CD8-positive, alpha-beta T cell (primary cell): ENCODE measurements at regions of chr1 and their contacts with region 1.

Region 1: GRCh38 chr1:23800400-23801337 is at the start of gene GALE:
- DNase-seq: peak; percentile 95 to 98 (median 97)
- ATAC-seq: peak; percentile 93
- H3K4me3 ChIP-seq: peak within 1 kb of the TSS; percentile 57 to 66
- H3K4me3 Mint-ChIP-seq: peak within 1 kb of the TSS; percentile 93
- H3K27ac ChIP-seq: peak within 1 kb of the TSS; percentile 78 to 82
- H3K27ac Mint-ChIP-seq: peak within 1 kb of the TSS; percentile 91
- H3K4me1 ChIP-seq: peaks cover 18% of the 10 kb centered on the region
- H3K4me1 Mint-ChIP-seq: peaks cover 12% of the 10 kb centered on the region
- H3K27me3 ChIP-seq: no peaks in the 10 kb centered on the region
- H3K27me3 Mint-ChIP-seq: no peaks in the 10 kb centered on the region
- CTCF ChIP-seq: no peak
- total RNA-seq, gene GALE: 4.6 to 4.7 TPM

Region 2: GRCh38 chr1:23530747-23531561 is 269.7 kb before region 1 on chr1 and contains the start of gene E2F2:
- CTCF ChIA-PET with region 1: no interaction called
- POLR2A ChIA-PET with region 1: no interaction called
- intact Hi-C with region 1: loop called in 1 of 2 experiments (anchors 2 kb)
- DNase-seq: peak; percentile 56 to 91 (median 82)
- ATAC-seq: peak; percentile 71
- H3K4me3 ChIP-seq: peak within 1 kb of the TSS; percentile 42 to 52
- H3K4me3 Mint-ChIP-seq: peak within 1 kb of the TSS; percentile 85
- H3K27ac ChIP-seq: peak within 1 kb of the TSS in 1 of 2 experiments; percentile 72
- H3K27ac Mint-ChIP-seq: peak within 1 kb of the TSS; percentile 13
- H3K4me1 ChIP-seq: peaks cover 60% of the 10 kb centered on the region
- H3K4me1 Mint-ChIP-seq: peaks cover 63% of the 10 kb centered on the region
- H3K27me3 ChIP-seq: no peaks in the 10 kb centered on the region
- H3K27me3 Mint-ChIP-seq: no peaks in the 10 kb centered on the region
- CTCF ChIP-seq: no peak
- total RNA-seq, gene E2F2: 0.19 to 0.38 TPM

Region 3: GRCh38 chr1:23777979-23778814 is 22.5 kb before region 1 on chr1 and contains the start of gene PITHD1:
- CTCF ChIA-PET with region 1: interaction called, 5 read pairs
- POLR2A ChIA-PET with region 1: interaction called, 25 read pairs
- intact Hi-C with region 1: loop called (anchors 1 kb)
- DNase-seq: peak; percentile 59 to 91 (median 78)
- ATAC-seq: peak; percentile 81
- H3K4me3 ChIP-seq: peak within 1 kb of the TSS; percentile 88 to 99
- H3K4me3 Mint-ChIP-seq: peak within 1 kb of the TSS; percentile 94
- H3K27ac ChIP-seq: peak within 1 kb of the TSS; percentile 87 to 95
- H3K27ac Mint-ChIP-seq: peak within 1 kb of the TSS; percentile 97
- H3K4me1 ChIP-seq: peaks cover 25% of the 10 kb centered on the region
- H3K4me1 Mint-ChIP-seq: peaks cover 54% of the 10 kb centered on the region
- H3K27me3 ChIP-seq: no peaks in the 10 kb centered on the region
- H3K27me3 Mint-ChIP-seq: no peaks in the 10 kb centered on the region
- CTCF ChIP-seq: no peak
- total RNA-seq, gene PITHD1: 112 to 117 TPM

Region 4: GRCh38 chr1:23838401-23838866 is 37.8 kb after region 1 on chr1:
- CTCF ChIA-PET with region 1: no interaction called
- POLR2A ChIA-PET with region 1: no interaction called
- intact Hi-C with region 1: loop called in 1 of 2 experiments (anchors 1 kb)
- DNase-seq: peak; percentile 55 to 91 (median 81)
- ATAC-seq: peak; percentile 100
- H3K4me3 ChIP-seq: peak overlapping the region; percentile 37 to 39
- H3K4me3 Mint-ChIP-seq: peak overlapping the region; percentile 79
- H3K27ac ChIP-seq: no peak overlapping the region
- H3K27ac Mint-ChIP-seq: peak overlapping the region; percentile 64
- H3K4me1 ChIP-seq: peaks cover 5% of the 10 kb centered on the region
- H3K4me1 Mint-ChIP-seq: peaks cover 11% of the 10 kb centered on the region
- H3K27me3 ChIP-seq: peaks cover 0 to 2% of the 10 kb centered on the region in 2 experiments
- H3K27me3 Mint-ChIP-seq: no peaks in the 10 kb centered on the region
- CTCF ChIP-seq: no peak

Region 5: DNA sequence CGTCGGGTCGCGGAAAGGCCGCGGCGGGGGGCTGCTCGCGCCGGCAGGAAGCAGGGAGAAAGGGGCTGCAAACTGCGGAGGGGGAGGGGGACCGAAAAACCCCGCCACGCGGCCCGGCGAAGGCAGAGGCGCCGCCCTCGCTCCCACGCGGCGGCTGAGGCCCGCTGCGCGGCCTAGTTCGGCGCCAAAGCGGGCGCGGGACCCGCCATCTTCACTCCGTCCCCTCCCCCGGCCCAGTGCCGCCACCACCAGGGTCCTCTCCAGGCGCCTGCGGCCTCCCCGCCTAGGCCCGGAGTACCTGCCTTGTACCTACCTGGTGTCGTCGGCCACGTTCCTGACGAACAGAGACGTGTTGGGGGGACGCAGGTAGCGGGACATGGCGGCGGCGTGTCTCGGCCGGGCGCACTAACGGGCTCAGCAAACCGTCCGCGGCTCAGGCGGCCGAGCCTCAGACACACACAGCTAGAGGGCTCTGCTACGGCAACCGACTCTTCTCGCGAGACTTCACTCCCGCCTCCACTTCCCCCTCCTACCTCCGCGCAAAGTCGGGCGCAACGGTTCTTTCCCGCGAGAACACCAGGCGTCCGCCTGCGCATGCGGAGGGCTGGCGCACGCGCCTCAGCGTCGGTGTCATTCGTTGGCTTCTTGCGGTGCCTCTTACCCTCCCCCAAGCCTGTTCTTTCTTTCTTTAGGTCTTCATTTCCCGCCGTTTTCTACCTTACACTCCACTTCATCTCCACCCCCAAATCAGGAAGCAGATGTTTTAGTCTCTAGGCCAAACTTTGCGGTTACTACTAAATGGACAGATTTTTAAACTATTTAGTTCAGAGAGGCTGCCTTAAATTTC is 179.4 kb after region 1 on chr1 and contains the start of gene SRSF10:
- CTCF ChIA-PET with region 1: no interaction called
- POLR2A ChIA-PET with region 1: no interaction called
- intact Hi-C with region 1: loop called in 1 of 2 experiments (anchors 10 kb)
- DNase-seq: peak; percentile 94 to 100 (median 97)
- ATAC-seq: peak; percentile 96
- H3K4me3 ChIP-seq: peak within 1 kb of the TSS; percentile 87 to 94
- H3K4me3 Mint-ChIP-seq: peak within 1 kb of the TSS; percentile 92
- H3K27ac ChIP-seq: peak within 1 kb of the TSS; percentile 92 to 98
- H3K27ac Mint-ChIP-seq: peak within 1 kb of the TSS; percentile 92
- H3K4me1 ChIP-seq: peaks cover 41% of the 10 kb centered on the region
- H3K4me1 Mint-ChIP-seq: peaks cover 52% of the 10 kb centered on the region
- H3K27me3 ChIP-seq: no peaks in the 10 kb centered on the region
- H3K27me3 Mint-ChIP-seq: no peaks in the 10 kb centered on the region
- CTCF ChIP-seq: peak; percentile 18
- total RNA-seq, gene SRSF10: 321 to 335 TPM